Activated CD4-positive, alpha-beta T cell treated with anti-CD3 and anti-CD28 coated beads for 36 hours (primary cell): ENCODE measurements at regions of chr5 and their contacts with region 1.

Region 1: GRCh38 chr5:36414869-36415282 is 113.2 kb upstream of the RANBP3L start:
- DNase-seq: no peak
- ATAC-seq: no peak
- H3K4me3 Mint-ChIP-seq: no peak overlapping the region
- H3K27ac Mint-ChIP-seq: no peak overlapping the region
- H3K4me1 Mint-ChIP-seq: peaks cover 7% of the 10 kb centered on the region
- H3K27me3 Mint-ChIP-seq: peaks cover 6% of the 10 kb centered on the region

Region 2: GRCh38 chr5:36264202-36264760 is 150.6 kb before region 1 on chr5:
- CTCF ChIA-PET with region 1: interaction called, 3 read pairs
- POLR2A ChIA-PET with region 1: no interaction called
- intact Hi-C with region 1: loop called in 1 of 2 experiments (anchors 10 kb)
- DNase-seq: no peak
- ATAC-seq: no peak
- H3K4me3 Mint-ChIP-seq: no peak overlapping the region
- H3K27ac Mint-ChIP-seq: no peak overlapping the region
- H3K4me1 Mint-ChIP-seq: no peaks in the 10 kb centered on the region
- H3K27me3 Mint-ChIP-seq: peaks cover 12% of the 10 kb centered on the region

Region 3: DNA sequence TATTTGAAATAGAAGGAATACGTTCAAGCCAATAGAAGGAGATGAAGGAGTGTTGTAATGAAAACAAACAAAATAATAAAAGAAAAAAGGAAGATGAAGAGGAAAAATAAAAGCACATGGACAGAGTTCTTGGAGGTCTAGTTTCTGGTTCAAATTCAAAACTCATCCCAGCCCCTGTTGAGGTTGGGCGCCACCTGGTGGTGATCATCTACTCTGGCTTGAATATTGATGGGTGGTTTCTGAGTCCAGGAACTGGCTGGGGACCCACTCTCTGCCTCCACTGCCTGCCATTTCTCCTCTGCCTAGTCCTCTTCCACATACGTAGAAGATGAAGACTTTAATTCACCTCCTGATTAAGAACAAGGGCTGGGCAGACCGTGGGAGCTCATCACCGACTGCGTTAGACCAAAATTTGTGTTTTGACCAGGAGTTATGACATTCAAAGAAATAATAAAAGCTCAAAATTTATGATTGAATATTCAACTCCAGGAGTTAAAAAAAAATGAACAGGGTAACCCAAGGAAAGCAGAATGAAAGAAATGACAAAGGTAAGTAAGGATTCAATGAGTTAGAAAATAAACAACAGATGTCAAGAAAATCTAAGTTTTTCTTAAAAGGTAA is 92.6 kb after region 1 on chr5:
- CTCF ChIA-PET with region 1: interaction called, 19 read pairs
- POLR2A ChIA-PET with region 1: no interaction called
- intact Hi-C with region 1: loop called (anchors 1 kb)
- DNase-seq: peak; percentile 87
- ATAC-seq: no peak
- H3K4me3 Mint-ChIP-seq: no peak overlapping the region
- H3K27ac Mint-ChIP-seq: no peak overlapping the region
- H3K4me1 Mint-ChIP-seq: no peaks in the 10 kb centered on the region
- H3K27me3 Mint-ChIP-seq: peaks cover 7% of the 10 kb centered on the region

Region 4: DNA sequence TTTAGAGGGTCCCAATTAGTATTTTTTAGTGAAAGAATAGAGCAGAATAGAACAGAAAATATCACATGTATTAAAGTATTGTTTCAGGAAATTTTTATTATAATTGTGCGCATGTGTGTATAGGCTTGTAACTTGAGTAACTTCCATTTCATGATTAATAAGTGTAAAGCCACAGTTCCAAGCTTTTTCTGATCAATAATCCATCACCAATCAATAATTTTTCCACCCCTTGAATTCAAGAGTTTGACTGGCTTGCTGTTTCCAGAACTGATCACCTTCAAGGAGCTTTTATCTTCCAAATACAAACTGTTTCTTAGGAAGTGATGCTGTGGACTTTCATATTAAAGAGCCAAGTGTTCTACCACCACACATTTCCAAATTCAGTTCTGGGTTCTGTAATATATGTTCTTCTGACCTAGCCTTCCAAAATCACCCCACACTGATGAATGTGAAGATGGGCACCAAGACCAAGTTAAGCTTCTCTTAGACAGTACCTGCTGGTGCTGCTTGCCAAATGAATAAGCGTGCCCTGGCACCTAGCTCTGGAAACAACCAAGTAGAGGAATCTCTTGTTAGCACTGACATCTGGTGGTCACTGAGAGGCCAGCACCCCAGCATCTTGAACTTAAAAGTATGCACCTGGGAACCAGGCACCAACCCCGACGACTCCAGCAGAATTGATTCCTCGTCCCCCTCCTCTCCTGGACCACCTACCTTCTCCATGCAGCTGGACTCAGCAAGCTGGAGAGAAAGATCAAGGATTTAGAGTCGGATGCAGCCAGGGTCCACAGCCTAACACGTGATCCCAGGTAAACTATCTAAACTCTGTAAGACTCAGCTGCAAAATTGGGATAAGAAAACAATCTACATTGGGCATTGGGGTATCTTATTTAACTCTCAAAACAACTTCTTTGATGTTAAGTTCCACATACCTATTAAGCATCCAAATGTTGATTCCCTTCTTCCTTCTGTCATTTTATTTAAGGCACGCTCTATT is 281.1 kb after region 1 on chr5:
- CTCF ChIA-PET with region 1: interaction called, 11 read pairs
- POLR2A ChIA-PET with region 1: no interaction called
- intact Hi-C with region 1: loop called (anchors 1 to 2 kb)
- DNase-seq: peak; percentile 73
- ATAC-seq: peak; percentile 84
- H3K4me3 Mint-ChIP-seq: no peak overlapping the region
- H3K27ac Mint-ChIP-seq: no peak overlapping the region
- H3K4me1 Mint-ChIP-seq: peaks cover 3% of the 10 kb centered on the region
- H3K27me3 Mint-ChIP-seq: peaks cover 18% of the 10 kb centered on the region